Activated CD4-positive, alpha-beta T cell treated with anti-CD3 and anti-CD28 coated beads for 36 hours (primary cell): ENCODE measurements at regions of chr10 and their contacts with region 1.

Region 1: DNA sequence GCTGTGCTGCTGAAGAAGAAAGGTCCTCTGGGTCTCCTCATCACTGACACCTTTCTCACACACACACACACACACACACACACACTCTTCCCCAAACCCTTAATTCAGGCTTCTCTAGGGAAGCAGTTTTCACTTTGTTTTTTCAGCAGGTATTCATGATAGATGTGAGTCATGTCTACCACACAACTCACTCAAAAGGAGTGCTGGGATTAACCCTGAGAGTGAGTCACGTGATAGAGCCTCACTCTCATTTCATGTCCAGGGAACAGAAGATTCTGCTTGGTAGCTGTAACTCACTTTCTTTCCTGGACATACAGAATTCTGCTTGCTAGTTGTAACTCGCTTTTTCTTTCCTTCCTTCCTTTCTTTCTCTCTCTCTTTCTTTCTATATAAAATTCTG is 45.4 kb downstream of the VIM start:
- DNase-seq: peak; percentile 13
- ATAC-seq: peak; percentile 98
- H3K4me3 Mint-ChIP-seq: no peak overlapping the region
- H3K27ac Mint-ChIP-seq: no peak overlapping the region
- H3K4me1 Mint-ChIP-seq: peaks cover 10% of the 10 kb centered on the region
- H3K27me3 Mint-ChIP-seq: peaks cover 3% of the 10 kb centered on the region

Region 2: GRCh38 chr10:17257466-17258321 is 15.7 kb before region 1 on chr10:
- CTCF ChIA-PET with region 1: interaction called, 11 read pairs
- POLR2A ChIA-PET with region 1: no interaction called
- intact Hi-C with region 1: no loop called
- DNase-seq: peak; percentile 66
- ATAC-seq: peak; percentile 86
- H3K4me3 Mint-ChIP-seq: peak overlapping the region; percentile 9
- H3K27ac Mint-ChIP-seq: peak overlapping the region; percentile 0
- H3K4me1 Mint-ChIP-seq: peaks cover 7% of the 10 kb centered on the region
- H3K27me3 Mint-ChIP-seq: peaks cover 3% of the 10 kb centered on the region